Ascending aorta (tissue), 2 donors: ENCODE measurements at regions of chr1 and their contacts with region 1.

Region 1: DNA sequence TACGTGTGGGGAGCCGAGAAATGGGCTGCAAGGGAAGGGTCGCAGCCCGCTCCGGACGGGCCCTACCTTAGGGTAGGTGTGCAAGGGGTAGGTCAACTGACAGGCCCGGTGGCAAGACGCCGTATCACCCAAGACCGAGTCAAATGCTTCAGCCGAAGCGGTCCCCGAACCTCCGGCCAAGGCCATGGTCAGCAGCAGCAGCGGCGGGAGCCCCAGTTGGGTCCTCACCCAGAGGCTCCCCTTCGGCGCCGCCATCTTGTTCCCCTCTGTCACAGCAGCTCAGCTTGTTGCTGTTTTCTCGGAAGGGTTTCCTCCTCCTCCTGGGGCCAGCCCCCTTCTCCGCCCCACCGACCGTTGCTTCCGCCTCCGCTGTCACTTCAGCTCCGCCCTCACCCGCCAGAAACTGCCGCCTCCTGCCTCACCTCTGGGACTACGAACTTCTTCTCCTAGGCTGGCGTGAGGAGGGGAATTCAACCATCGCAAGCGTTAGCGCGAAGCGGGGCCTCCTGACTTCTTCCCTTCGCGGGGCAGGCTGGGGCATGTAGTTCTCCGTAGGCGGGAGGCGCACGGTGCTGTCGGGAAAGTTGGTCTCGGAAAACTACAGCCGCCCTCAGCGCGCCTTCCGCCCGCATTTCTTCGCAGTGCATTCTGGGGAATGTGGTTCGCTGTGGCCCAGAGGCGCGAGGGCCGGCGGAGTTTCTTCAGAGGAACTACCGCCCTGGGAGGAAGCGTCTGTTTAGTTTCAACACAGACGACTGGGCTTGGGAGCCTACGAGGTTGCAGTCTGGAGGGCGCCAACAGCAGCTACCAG is at the starts of genes TCEANC2 and TMEM59:
- DNase-seq: peak; percentile 95 to 99
- H3K4me3 ChIP-seq: peak within 1 kb of the TSS; percentile 91 to 94
- H3K27ac ChIP-seq: peak within 1 kb of the TSS; percentile 96 to 98
- H3K4me1 ChIP-seq: peaks cover 5 to 41% of the 10 kb centered on the region in 2 donors
- H3K27me3 ChIP-seq: no peaks in the 10 kb centered on the region
- CTCF ChIP-seq: no peak
- total RNA-seq, gene TCEANC2: 0.64 TPM
- total RNA-seq, gene TMEM59: 97.5 TPM

Region 2: DNA sequence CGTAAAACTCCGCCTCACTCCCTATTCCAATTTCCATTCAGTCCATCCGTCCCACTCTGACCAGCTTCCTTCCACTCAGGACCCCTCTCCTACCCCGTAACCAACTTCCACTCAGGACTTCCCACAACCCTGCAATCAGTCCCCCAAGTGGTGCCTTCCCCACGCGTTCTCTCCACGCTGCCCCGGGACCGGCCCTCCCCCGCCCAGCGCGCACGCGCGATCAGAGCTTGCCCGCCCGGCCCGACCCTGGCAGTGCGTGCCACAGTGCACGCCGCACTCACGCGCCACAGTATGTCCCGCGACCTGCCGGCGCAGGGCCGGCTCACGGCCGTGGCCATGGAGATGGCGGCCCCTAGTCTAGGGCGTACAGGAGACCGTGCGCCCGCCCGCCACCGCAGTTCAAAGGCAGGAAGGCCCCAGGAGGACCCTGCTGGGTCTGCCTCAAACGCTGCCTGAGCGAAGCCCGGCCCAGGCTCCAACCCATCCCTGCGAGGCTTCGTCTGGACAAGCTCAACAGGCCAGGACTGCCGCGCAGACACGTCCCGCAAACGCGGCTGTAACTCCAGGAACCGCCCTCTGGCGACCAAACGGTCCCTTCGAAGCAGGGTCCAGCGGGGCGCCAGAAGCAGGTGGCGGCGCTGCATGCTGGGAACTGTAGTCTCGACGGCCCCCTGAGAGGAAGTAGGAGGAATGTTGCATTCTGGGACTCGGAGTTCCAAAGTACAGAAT is 215.1 kb before region 1 on chr1 and contains the start of gene NDC1:
- intact Hi-C with region 1: loop called (anchors 2 kb)
- DNase-seq: peak; percentile 63 to 93
- H3K4me3 ChIP-seq: peak within 1 kb of the TSS; percentile 53 to 83
- H3K27ac ChIP-seq: peak within 1 kb of the TSS; percentile 90 to 97
- H3K4me1 ChIP-seq: peaks cover 0 to 9% of the 10 kb centered on the region in 2 donors
- H3K27me3 ChIP-seq: no peaks in the 10 kb centered on the region
- CTCF ChIP-seq: peak in 1 of 3 experiments; percentile 35
- total RNA-seq, gene NDC1: 9.3 TPM

Region 3: DNA sequence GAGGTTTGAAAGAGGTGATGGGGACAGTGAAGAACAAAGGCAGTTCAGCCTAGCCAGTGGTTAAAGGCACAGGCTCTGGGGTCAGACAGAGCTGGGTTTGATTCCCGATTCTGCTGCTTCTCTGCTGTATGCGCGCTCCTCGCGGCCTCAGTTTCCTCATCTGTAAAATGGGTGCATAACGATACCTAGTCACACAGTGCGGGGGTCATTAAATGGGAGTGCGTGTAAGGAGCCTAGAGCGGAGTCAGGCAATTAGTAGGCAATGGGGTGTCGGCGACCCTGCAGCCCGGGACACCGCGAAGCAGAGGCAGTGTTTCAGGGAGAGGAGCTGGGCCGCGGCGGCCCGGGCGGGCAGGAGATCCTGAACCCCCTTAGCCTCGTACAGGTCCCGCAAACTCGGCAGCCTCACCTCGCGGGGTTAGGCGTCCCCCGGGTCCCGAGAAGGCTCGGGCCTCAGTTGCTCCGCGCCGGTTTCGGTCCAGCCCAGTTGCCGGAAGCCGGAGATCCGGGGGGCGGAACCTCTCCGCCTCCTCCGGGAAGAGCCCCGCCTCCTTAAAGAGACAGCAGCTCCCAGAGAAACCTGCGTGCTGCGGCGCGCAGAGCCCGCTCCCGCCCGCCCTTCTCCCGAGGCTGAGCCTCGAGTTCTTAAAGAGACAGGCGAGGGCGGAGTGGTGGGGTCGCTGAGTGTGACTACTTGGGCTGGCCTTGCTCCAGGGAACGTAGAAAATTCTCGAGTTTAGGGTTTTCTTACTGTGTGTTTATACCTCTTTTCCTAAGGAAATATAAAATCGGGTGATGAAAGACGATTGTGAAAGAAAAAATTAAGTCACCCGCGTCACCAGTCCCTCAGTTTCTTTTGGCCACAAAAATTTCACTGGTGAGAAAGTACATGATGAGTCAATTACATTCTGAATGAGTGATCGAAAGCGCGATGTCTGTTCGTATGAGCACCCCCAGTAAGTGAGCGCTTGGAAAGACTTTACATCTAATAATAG is 163.5 kb before region 1 on chr1 and contains the start of gene YIPF1:
- intact Hi-C with region 1: loop called (anchors 2 kb)
- DNase-seq: peak; percentile 68 to 96
- H3K4me3 ChIP-seq: peak within 1 kb of the TSS; percentile 79 to 83
- H3K27ac ChIP-seq: peak within 1 kb of the TSS; percentile 71 to 87
- H3K4me1 ChIP-seq: peaks cover 7 to 9% of the 10 kb centered on the region in 2 donors
- H3K27me3 ChIP-seq: no peaks in the 10 kb centered on the region
- CTCF ChIP-seq: no peak
- total RNA-seq, gene YIPF1: 17.0 TPM

Region 4: GRCh38 chr1:53945433-53946251 is 107.5 kb before region 1 on chr1 and contains the start of gene IFT25:
- intact Hi-C with region 1: loop called (anchors 1 kb)
- DNase-seq: peak; percentile 87 to 98
- H3K4me3 ChIP-seq: peak within 1 kb of the TSS; percentile 80 to 96
- H3K27ac ChIP-seq: peak within 1 kb of the TSS; percentile 77 to 98
- H3K4me1 ChIP-seq: peaks cover 9 to 16% of the 10 kb centered on the region in 2 donors
- H3K27me3 ChIP-seq: no peaks in the 10 kb centered on the region
- CTCF ChIP-seq: no peak
- total RNA-seq, gene IFT25: not detected

Region 5: DNA sequence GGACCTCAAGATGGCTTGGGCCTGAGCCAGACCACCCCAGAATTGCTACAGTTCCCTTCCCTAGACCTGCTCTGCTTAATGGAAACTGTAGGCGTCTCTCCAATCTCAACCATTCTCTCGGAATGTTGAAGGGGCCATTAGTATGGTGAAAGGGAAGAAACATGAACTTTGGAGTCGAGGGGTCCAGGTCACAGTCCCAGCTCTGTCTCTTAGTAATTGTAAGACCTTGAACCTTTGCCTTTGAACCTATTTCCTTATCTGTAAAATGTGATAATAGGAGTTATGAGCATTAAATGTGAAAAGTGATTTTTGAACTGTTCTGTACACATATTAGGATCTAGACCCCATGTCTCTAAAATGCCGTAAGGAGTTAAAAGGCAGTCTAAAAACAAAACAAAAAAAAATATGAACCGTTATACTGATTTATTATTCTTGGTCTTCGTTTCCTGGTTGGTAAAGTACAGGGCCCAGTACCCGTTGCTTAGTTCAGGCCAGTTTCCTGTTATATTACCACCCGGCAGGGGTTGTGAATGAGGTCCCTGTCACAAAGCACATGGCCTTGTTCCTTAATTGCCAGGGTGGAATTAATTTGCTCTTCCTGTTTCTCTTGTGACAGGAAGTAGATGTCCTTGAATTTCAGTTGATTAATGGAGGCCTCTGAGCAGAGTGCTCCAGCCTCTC is 42.5 kb after region 1 on chr1:
- intact Hi-C with region 1: no loop called
- DNase-seq: no peak
- H3K4me3 ChIP-seq: no peak overlapping the region
- H3K27ac ChIP-seq: no peak overlapping the region
- H3K4me1 ChIP-seq: no peaks in the 10 kb centered on the region
- H3K27me3 ChIP-seq: no peaks in the 10 kb centered on the region
- CTCF ChIP-seq: no peak

Region 6: GRCh38 chr1:54581621-54582035 is 528.5 kb after region 1 on chr1:
- intact Hi-C with region 1: loop called (anchors 5 kb)
- DNase-seq: peak; percentile 90 to 98
- H3K4me3 ChIP-seq: no peak overlapping the region
- H3K27ac ChIP-seq: peak overlapping the region; percentile 93 to 96
- H3K4me1 ChIP-seq: peaks cover 0 to 37% of the 10 kb centered on the region in 2 donors
- H3K27me3 ChIP-seq: no peaks in the 10 kb centered on the region
- CTCF ChIP-seq: peak in 2 of 3 experiments; percentile 6 to 35

Region 7: GRCh38 chr1:54715493-54716298 is 662.6 kb after region 1 on chr1 and contains the start of gene TTC4:
- intact Hi-C with region 1: loop called (anchors 5 kb)
- DNase-seq: peak; percentile 25 to 88
- H3K4me3 ChIP-seq: peak within 1 kb of the TSS; percentile 69 to 92
- H3K27ac ChIP-seq: peak within 1 kb of the TSS; percentile 73 to 82
- H3K4me1 ChIP-seq: peaks cover 0 to 8% of the 10 kb centered on the region in 2 donors
- H3K27me3 ChIP-seq: no peaks in the 10 kb centered on the region
- CTCF ChIP-seq: no peak
- total RNA-seq, gene TTC4: 20.6 TPM